AG04449 (cell line): ENCODE measurements at regions of chr4 and their contacts with region 1.

Region 1: GRCh38 chr4:2220016-2220630 is 21.8 kb downstream of the HAUS3 start:
- DNase-seq: no peak
- H3K4me3 ChIP-seq: no peak overlapping the region
- CTCF ChIP-seq: peak; percentile 89

Region 2: DNA sequence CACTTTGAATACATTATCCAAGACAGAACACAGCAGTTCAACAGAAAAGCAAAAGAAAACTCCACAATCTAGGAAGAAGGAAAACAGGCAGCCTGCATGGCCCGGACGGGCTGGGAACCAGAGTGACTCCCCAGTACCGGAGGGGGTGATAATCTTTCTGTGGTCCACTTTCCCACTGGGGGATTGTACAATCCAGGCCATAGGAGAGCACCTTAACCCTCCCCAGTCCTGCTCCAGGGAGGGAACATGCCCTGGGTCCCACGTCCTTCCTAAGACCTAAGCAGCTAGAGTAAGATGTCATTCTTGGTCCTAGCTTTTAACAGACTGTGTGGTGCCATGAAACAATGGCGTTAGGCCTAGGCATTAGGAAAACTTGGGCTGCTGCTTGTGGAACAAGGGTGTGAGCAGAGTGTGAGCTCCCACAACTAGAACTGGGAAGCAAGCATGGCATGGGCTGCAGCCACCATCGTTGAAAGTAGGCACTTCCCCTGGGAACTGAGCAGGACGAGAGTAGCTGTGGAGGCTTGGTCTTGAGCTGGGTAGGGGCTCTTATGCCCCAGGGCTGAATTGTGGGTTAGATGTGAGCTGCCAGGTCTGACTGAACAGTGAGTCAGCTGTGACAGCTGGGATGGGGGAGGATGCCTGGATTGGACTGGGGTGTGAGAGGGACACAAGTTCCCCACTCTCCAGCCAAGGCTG is 118.6 kb before region 1 on chr4:
- CTCF ChIA-PET with region 1: no interaction called
- POLR2A ChIA-PET with region 1: no interaction called
- DNase-seq: no peak
- H3K4me3 ChIP-seq: no peak overlapping the region
- CTCF ChIP-seq: no peak

Region 3: GRCh38 chr4:2154215-2154740 is 65.8 kb before region 1 on chr4:
- CTCF ChIA-PET with region 1: no interaction called
- POLR2A ChIA-PET with region 1: no interaction called
- DNase-seq: no peak
- H3K4me3 ChIP-seq: no peak overlapping the region
- CTCF ChIP-seq: no peak

Region 4: GRCh38 chr4:2231082-2231481 is 11.0 kb after region 1 on chr4:
- CTCF ChIA-PET with region 1: interaction called, 47 read pairs
- POLR2A ChIA-PET with region 1: no interaction called
- DNase-seq: no peak
- H3K4me3 ChIP-seq: no peak overlapping the region
- CTCF ChIP-seq: no peak

Region 5: DNA sequence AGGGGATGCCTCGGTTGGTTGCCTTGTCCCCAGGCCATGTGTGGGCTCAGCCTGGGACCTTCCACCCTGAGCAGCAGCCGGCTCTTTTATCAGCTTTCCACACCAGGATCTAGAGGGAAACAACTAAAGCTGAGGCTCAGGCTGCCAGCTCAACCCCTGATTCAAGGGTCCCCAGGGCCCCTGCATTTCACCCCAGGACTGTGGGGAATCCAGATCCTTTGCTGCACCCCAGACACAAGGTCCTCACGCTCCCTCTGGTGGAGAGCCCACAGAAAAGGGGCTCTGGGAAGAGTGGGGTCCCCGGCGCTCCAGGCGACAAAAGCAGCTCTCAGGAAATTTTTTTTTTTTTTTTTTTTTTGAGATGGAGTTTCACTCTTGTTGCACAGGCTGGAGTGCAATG is 134.0 kb after region 1 on chr4:
- CTCF ChIA-PET with region 1: interaction called, 23 read pairs
- POLR2A ChIA-PET with region 1: no interaction called
- DNase-seq: no peak
- H3K4me3 ChIP-seq: no peak overlapping the region
- CTCF ChIP-seq: peak; percentile 51

Region 6: DNA sequence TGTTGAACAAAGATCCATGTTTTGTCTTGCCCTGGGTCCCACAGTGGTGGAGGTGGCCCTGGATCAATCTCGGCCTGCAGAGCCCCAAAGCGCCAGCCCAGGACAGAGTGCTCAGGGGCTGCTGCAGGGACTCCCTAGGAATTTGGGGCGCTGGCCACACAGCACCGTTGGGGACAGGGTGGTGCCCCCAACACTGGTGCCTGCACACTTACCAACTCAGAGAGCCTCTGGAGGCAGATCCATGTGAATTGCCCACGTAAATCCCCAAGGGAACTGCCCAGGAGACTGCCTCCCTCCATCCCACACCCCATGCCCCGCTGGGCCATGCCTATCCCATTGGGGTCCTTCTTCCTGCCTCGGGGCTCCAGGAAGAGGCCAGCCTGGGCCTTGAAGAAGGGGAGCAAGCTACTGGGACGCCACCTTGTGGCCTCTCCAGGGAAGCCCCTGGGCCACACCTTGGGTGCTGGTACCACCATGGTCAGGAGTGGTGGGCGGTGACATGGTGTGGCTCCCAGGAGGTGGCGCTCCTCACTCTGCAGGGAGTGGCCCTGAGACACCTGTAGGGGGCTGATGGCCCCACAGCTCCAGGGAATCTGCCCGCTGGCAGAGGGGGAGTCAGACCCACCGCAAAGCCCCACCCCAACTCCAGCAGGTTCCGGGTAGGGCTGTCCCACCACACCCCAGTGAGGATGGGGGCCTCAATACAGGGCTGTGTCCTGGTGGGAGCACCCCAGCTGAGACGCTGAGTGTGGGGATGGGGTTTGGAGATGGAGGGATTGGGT is 221.5 kb after region 1 on chr4:
- CTCF ChIA-PET with region 1: interaction called, 55 read pairs
- POLR2A ChIA-PET with region 1: no interaction called
- DNase-seq: no peak
- H3K4me3 ChIP-seq: no peak overlapping the region
- CTCF ChIP-seq: peak; percentile 74

Region 7: GRCh38 chr4:2468445-2469192 is 248.5 kb after region 1 on chr4 and contains the start of gene RNF4:
- CTCF ChIA-PET with region 1: interaction called, 45 read pairs
- POLR2A ChIA-PET with region 1: no interaction called
- DNase-seq: peak; percentile 81
- H3K4me3 ChIP-seq: peak within 1 kb of the TSS; percentile 92
- CTCF ChIP-seq: no peak